CD8-positive, alpha-beta T cell (primary cell): ENCODE measurements at regions of chr17 and their contacts with region 1.

Region 1: GRCh38 chr17:78970834-78971773 is 8.6 kb downstream of the LGALS3BP start:
- DNase-seq: peak; percentile 61 to 87 (median 80)
- ATAC-seq: peak; percentile 83
- H3K4me3 ChIP-seq: no peak overlapping the region
- H3K4me3 Mint-ChIP-seq: no peak overlapping the region
- H3K27ac ChIP-seq: no peak overlapping the region
- H3K27ac Mint-ChIP-seq: no peak overlapping the region
- H3K4me1 ChIP-seq: peaks cover 4% of the 10 kb centered on the region
- H3K4me1 Mint-ChIP-seq: peaks cover 6% of the 10 kb centered on the region
- H3K27me3 ChIP-seq: no peaks in the 10 kb centered on the region
- H3K27me3 Mint-ChIP-seq: no peaks in the 10 kb centered on the region
- CTCF ChIP-seq: peak; percentile 91

Region 2: DNA sequence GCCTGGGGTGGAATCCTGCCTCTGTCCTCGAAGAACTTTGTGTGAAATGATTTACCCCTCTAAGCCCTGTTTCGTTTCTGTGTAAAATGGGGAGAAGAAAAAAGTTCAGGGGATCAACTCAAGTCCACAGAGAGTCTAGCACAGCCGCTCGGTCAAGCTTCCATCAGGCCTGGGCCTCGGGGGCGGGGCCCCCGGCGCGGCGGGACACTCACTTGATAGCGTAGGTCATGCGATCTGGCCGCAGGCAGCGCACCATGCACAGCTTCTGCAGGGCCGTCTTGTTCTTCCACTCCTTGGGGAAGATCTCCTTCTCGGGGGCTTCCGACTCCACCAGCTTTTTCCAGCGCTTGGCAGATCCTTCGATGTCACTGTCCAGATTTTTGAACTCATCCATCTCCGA is 526.7 kb before region 1 on chr17:
- CTCF ChIA-PET with region 1: interaction called, 4 read pairs
- POLR2A ChIA-PET with region 1: no interaction called
- intact Hi-C with region 1: loop called in 1 of 2 experiments (anchors 2 kb)
- DNase-seq: no peak
- ATAC-seq: no peak
- H3K4me3 ChIP-seq: no peak overlapping the region
- H3K4me3 Mint-ChIP-seq: no peak overlapping the region
- H3K27ac ChIP-seq: no peak overlapping the region
- H3K27ac Mint-ChIP-seq: no peak overlapping the region
- H3K4me1 ChIP-seq: no peaks in the 10 kb centered on the region
- H3K4me1 Mint-ChIP-seq: no peaks in the 10 kb centered on the region
- H3K27me3 ChIP-seq: no peaks in the 10 kb centered on the region
- H3K27me3 Mint-ChIP-seq: no peaks in the 10 kb centered on the region
- CTCF ChIP-seq: no peak

Region 3: DNA sequence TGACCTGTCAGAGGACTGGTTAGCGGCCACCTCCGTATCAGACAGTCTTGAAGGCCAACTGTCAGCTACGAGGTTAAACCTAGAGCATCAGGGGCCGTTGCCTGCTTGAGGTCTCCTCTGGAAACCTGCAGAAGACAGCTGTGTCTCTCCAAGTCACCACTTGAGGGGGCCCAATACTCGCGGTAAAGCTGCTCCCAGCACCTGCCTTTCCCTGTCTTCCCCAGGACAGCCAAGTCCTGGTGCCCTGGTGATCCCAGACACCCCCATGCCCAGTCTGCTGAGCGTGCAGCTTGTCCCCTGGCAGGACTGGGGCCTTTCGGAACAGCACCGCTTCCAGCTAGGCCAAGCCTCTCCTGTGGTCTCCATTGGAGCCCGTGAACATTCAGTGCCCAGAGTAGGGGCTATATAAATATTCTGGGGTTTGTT is 474.0 kb before region 1 on chr17:
- CTCF ChIA-PET with region 1: interaction called, 11 read pairs
- POLR2A ChIA-PET with region 1: no interaction called
- intact Hi-C with region 1: loop called in 1 of 2 experiments (anchors 1 kb)
- DNase-seq: peak in 8 of 9 experiments; percentile 16 to 69 (median 48)
- ATAC-seq: peak; percentile 55
- H3K4me3 ChIP-seq: no peak overlapping the region
- H3K4me3 Mint-ChIP-seq: no peak overlapping the region
- H3K27ac ChIP-seq: no peak overlapping the region
- H3K27ac Mint-ChIP-seq: no peak overlapping the region
- H3K4me1 ChIP-seq: no peaks in the 10 kb centered on the region
- H3K4me1 Mint-ChIP-seq: no peaks in the 10 kb centered on the region
- H3K27me3 ChIP-seq: no peaks in the 10 kb centered on the region
- H3K27me3 Mint-ChIP-seq: no peaks in the 10 kb centered on the region
- CTCF ChIP-seq: peak; percentile 36

Region 4: DNA sequence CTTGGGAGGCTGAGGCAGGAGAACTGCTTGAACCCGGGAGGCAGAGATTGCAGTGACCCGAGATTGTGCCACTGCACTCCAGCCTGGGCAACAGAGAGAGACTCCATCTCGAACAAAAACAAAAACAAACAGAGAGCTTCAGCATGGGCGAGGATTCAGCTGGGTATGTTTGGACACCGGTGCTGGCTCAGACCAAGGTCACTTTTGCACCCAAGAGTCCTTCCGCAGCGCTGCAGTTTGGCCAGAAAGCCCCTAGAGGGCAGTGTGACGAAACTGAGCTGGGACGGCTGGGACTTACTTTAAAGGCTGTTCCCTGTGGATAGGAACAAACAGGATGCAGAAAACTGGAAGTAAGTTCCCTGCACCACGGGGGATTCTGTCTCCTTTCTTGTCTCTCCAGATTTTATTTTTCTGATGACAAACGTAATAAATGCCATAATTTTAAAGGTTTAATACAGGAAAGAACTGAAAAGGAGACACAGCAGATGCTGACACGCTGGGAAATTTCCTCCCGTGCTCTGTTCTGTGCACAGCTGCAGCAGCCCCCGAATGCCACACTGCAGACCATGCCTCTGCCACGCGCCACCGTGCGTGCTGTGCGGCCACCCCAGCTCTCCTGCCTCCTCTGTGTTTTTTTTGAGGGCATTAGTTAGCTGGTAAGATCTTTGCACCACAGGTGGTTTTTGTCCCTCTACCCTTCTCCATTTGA is 105.3 kb before region 1 on chr17:
- CTCF ChIA-PET with region 1: interaction called, 149 read pairs
- POLR2A ChIA-PET with region 1: interaction called, 4 read pairs
- intact Hi-C with region 1: loop called in 1 of 2 experiments (anchors 1 kb)
- DNase-seq: peak in 8 of 9 experiments; percentile 34 to 79 (median 66)
- ATAC-seq: peak; percentile 57
- H3K4me3 ChIP-seq: no peak overlapping the region
- H3K4me3 Mint-ChIP-seq: no peak overlapping the region
- H3K27ac ChIP-seq: no peak overlapping the region
- H3K27ac Mint-ChIP-seq: no peak overlapping the region
- H3K4me1 ChIP-seq: no peaks in the 10 kb centered on the region
- H3K4me1 Mint-ChIP-seq: peaks cover 3% of the 10 kb centered on the region
- H3K27me3 ChIP-seq: no peaks in the 10 kb centered on the region
- H3K27me3 Mint-ChIP-seq: peaks cover 5% of the 10 kb centered on the region
- CTCF ChIP-seq: peak; percentile 97

Region 5: DNA sequence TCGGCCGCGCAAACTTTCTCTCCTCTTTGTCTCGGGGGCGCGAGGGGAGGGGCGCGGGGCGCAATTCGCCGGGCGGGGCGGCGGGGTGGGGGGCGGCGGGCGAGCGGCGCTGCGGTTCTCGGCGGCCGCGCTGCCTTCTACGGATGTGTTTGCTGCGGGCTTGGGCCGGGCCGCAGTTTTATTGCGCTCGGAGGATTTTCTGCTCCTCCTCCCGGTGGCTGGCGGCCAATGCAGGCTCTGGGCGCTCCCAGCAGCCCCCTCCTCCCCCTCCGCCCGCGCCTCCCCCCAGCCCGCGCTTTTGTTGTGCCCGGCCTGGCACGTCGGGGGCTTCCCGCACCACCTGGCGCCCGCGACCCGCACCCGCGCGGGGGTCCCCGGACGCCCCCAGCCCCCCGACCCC is 45.9 kb before region 1 on chr17 and contains the start of gene TIMP2:
- CTCF ChIA-PET with region 1: no interaction called
- POLR2A ChIA-PET with region 1: no interaction called
- intact Hi-C with region 1: loop called in 1 of 2 experiments (anchors 2 kb)
- DNase-seq: peak; percentile 46 to 85 (median 74)
- ATAC-seq: peak; percentile 83
- H3K4me3 ChIP-seq: peak within 1 kb of the TSS; percentile 45 to 55
- H3K4me3 Mint-ChIP-seq: peak within 1 kb of the TSS; percentile 80
- H3K27ac ChIP-seq: no peak within 1 kb of the TSS
- H3K27ac Mint-ChIP-seq: no peak within 1 kb of the TSS
- H3K4me1 ChIP-seq: peaks cover 13% of the 10 kb centered on the region
- H3K4me1 Mint-ChIP-seq: peaks cover 11% of the 10 kb centered on the region
- H3K27me3 ChIP-seq: peaks cover 0 to 3% of the 10 kb centered on the region in 2 experiments
- H3K27me3 Mint-ChIP-seq: peaks cover 5% of the 10 kb centered on the region
- CTCF ChIP-seq: peak; percentile 36
- total RNA-seq, gene TIMP2: 8.9 to 9.4 TPM

Region 6: DNA sequence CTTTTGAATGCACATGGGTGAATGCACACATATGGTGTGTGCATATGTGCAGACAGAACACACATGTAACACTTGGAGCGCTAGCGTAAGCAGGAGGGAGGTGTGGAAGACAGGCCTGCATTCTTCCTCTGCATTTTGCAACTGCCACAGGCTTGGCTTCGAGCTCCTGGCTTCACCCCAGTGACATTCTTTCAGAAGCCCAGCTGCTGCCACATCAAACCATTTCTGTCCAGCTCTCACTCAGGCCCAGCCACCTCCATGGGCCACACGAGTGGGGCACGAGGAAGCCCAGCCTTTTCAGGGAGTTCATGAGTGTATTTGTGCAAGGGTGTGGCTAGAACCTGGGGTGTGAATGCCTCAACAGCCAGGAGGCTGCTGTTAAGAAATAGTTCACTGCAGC is 10.2 kb before region 1 on chr17:
- CTCF ChIA-PET with region 1: interaction called, 10 read pairs
- POLR2A ChIA-PET with region 1: no interaction called
- intact Hi-C with region 1: no loop called
- DNase-seq: no peak
- ATAC-seq: no peak
- H3K4me3 ChIP-seq: no peak overlapping the region
- H3K4me3 Mint-ChIP-seq: no peak overlapping the region
- H3K27ac ChIP-seq: no peak overlapping the region
- H3K27ac Mint-ChIP-seq: no peak overlapping the region
- H3K4me1 ChIP-seq: no peaks in the 10 kb centered on the region
- H3K4me1 Mint-ChIP-seq: no peaks in the 10 kb centered on the region
- H3K27me3 ChIP-seq: no peaks in the 10 kb centered on the region
- H3K27me3 Mint-ChIP-seq: no peaks in the 10 kb centered on the region
- CTCF ChIP-seq: no peak